WTC11 (cell line): ENCODE measurements at regions of chr16 and their contacts with region 1.

Region 1: GRCh38 chr16:30692381-30693064 is 6.4 kb upstream of the SRCAP start:
- DNase-seq: no peak
- ATAC-seq: peak; percentile 80
- H3K4me3 Mint-ChIP-seq: peak overlapping the region; percentile 38
- H3K27ac Mint-ChIP-seq: no peak overlapping the region
- H3K4me1 Mint-ChIP-seq: peaks cover 22% of the 10 kb centered on the region
- H3K27me3 Mint-ChIP-seq: peaks cover 100% of the 10 kb centered on the region
- CTCF ChIP-seq: no peak

Region 2: DNA sequence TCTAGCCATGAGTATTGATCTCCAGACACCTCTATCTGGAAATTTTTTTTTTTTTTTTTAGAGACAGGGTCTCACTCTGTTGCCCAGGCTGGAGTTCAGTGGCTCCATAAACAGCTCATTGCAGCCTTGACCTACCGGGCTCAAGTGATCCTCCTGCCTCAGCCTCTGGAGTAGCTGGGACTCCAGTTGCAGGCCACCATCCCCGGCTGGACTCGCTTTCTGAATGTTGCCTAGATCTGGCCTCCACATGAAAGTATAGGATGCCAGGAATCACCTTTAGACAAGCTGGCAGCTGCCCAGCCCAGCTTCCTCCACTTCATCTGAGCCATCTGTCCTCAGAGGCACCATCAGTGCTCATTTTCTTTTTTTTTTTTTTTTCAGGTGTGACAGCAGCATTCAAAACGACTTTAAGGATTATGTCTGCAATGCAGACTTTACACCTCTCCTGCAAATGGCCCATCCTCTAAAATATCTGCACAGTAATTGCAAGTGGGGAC is 48.1 kb before region 1 on chr16:
- CTCF ChIA-PET with region 1: interaction called, 12 read pairs
- POLR2A ChIA-PET with region 1: no interaction called
- DNase-seq: no peak
- ATAC-seq: no peak
- H3K4me3 Mint-ChIP-seq: no peak overlapping the region
- H3K27ac Mint-ChIP-seq: no peak overlapping the region
- H3K4me1 Mint-ChIP-seq: no peaks in the 10 kb centered on the region
- H3K27me3 Mint-ChIP-seq: peaks cover 45% of the 10 kb centered on the region
- CTCF ChIP-seq: no peak

Region 3: DNA sequence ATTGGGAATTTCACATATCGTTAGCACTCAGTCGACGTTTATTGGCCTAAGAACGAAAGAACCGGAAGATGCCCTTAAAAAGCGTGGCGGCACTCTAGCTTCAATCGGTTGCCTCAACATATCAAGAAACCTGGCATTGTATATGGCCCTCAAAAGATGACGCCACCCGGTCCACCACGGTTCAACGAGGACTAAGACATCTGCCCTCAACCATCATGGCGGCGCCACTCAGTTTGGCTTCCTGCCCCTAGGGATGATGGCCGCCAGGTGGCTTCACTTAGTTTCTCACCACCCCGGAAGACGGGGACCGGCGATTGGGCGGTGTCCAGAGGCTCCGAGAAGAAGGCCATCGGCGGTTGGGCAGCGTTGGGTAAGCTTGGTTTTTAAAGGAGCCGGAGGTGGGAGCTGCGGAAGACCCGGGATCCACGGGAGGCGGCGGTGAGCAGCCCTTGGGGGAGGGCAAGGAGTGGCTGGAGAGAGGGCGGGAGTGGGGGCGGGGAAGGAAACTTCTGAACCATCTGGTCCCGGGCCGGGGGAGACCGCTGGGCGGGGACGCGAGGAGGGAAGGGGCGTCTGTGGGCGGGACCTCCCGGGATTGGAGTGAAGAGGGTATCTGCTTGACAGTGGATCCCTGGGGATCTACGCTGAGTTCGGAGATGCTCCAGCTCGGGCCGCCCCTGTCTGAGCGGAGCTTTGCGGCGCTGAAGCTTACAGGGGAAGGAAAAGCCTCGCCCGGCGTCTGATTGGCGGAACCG is 42.0 kb before region 1 on chr16 and contains the start of gene PRR14:
- CTCF ChIA-PET with region 1: interaction called, 18 read pairs
- POLR2A ChIA-PET with region 1: interaction called, 3 read pairs
- DNase-seq: peak; percentile 98
- ATAC-seq: peak; percentile 89
- H3K4me3 Mint-ChIP-seq: peak within 1 kb of the TSS; percentile 97
- H3K27ac Mint-ChIP-seq: peak within 1 kb of the TSS; percentile 98
- H3K4me1 Mint-ChIP-seq: peaks cover 15% of the 10 kb centered on the region
- H3K27me3 Mint-ChIP-seq: peaks cover 43% of the 10 kb centered on the region
- CTCF ChIP-seq: 0 out of 2 replicates have a peak, but pooled peaks have one; percentile 16
- total RNA-seq, gene PRR14: 21.9 to 24.3 TPM (median 22.0 TPM) in 3 replicates

Region 4: GRCh38 chr16:30657866-30658730 is 34.4 kb before region 1 on chr16 and contains the start of gene FBRS:
- CTCF ChIA-PET with region 1: interaction called, 36 read pairs
- POLR2A ChIA-PET with region 1: interaction called, 4 read pairs
- DNase-seq: peak; percentile 100
- ATAC-seq: peak; percentile 93
- H3K4me3 Mint-ChIP-seq: peak within 1 kb of the TSS; percentile 96
- H3K27ac Mint-ChIP-seq: peak within 1 kb of the TSS; percentile 100
- H3K4me1 Mint-ChIP-seq: peaks cover 9% of the 10 kb centered on the region
- H3K27me3 Mint-ChIP-seq: peaks cover 37% of the 10 kb centered on the region
- CTCF ChIP-seq: peak; percentile 62; the same call in 1 of the 2 replicates
- total RNA-seq, gene FBRS: 18.9 to 23.2 TPM (median 19.9 TPM) in 3 replicates

Region 5: DNA sequence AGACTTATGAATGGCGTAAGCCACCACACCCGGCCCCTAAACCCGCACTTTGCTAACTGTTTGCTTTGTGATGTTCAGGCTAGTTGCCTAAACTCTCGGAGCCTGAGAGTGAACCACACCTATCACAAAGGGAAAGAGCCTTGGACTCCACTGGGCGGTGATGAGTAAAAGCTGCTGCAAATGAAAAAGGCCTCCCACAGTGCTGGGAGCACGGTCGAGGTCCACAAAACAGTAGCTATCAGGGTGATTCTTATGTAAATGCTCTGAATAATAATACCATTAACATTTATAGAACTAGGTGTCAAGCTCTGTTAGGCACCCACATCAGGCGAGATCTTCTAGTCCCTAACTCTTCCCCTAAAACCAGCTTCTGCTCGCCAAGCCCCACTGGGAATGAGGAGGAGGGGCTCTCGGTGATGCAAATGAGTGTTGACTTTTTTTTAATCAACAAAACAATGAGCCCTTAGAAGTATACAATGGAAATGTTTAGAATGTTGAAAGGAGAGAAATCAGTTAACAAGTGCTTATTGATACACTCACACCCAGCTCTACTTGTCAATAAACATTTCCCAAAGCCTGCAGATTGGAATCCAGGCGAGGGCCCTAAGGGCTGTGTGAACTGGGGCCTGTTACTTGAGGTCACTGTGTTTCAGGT is 14.5 kb before region 1 on chr16:
- CTCF ChIA-PET with region 1: interaction called, 40 read pairs
- POLR2A ChIA-PET with region 1: interaction called, 6 read pairs
- DNase-seq: peak; percentile 72
- ATAC-seq: peak; percentile 94
- H3K4me3 Mint-ChIP-seq: no peak overlapping the region
- H3K27ac Mint-ChIP-seq: no peak overlapping the region
- H3K4me1 Mint-ChIP-seq: peaks cover 5% of the 10 kb centered on the region; the same call in 1 of the 2 replicates
- H3K27me3 Mint-ChIP-seq: peaks cover 99% of the 10 kb centered on the region
- CTCF ChIP-seq: no peak